Naive thymus-derived CD4-positive, alpha-beta T cell (primary cell): ENCODE measurements at regions of chr20 and their contacts with region 1.

Region 1: DNA sequence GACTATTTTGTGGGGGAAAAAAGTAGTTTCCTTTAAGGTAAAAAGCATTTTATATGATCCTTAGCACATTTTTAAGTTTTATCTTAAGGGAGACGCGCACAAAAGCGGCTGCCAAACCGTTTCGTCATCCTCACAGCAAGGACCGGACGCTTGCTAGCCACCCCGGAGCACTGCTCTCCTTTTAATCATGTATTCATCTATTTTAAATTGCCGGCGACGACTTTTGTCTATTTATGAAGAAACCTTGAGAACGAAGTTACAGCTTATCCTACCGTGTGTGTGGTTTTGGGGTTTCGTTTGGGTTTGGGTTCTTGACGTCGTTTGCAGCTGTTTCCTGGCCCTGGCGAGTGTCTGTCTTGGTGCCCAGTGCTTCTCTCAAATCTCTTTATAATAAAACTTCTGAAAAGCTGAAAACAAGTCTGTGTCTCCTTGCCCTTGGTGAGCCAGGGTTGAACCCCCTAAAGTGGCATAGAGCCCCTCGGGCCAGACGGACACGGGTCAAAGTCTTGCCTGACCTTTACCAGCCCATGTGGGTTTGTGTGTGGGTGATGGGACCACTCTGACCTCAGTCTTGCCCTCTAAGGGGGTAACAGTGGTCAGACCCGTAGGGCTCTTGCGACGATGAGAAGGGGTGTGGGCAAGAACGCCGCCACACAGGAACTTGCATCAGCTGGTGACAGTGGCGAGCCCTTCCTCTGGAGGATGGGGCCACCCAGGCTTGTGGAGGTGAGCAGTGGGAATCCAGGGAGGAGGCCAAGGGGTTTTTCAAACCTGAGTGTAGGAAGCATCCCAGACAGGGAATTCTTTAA is 117.6 kb downstream of the JPH2 start:
- DNase-seq: peak; percentile 47 to 97 (median 90)
- ATAC-seq: peak; percentile 65
- H3K4me3 ChIP-seq: peak overlapping the region; percentile 60
- H3K4me3 Mint-ChIP-seq: peak overlapping the region; percentile 70 to 93 (median 86)
- H3K27ac ChIP-seq: peak overlapping the region; percentile 97
- H3K27ac Mint-ChIP-seq: peak overlapping the region; percentile 94 to 100 (median 99)
- H3K4me1 ChIP-seq: peaks cover 31 to 77% of the 10 kb centered on the region in 2 donors
- H3K4me1 Mint-ChIP-seq: peaks cover 40 to 96% (median 81%) of the 10 kb centered on the region in 7 donors
- H3K27me3 ChIP-seq: no peaks in the 10 kb centered on the region
- H3K27me3 Mint-ChIP-seq: peaks cover 0 to 16% (median 0%) of the 10 kb centered on the region in 5 donors

Region 2: DNA sequence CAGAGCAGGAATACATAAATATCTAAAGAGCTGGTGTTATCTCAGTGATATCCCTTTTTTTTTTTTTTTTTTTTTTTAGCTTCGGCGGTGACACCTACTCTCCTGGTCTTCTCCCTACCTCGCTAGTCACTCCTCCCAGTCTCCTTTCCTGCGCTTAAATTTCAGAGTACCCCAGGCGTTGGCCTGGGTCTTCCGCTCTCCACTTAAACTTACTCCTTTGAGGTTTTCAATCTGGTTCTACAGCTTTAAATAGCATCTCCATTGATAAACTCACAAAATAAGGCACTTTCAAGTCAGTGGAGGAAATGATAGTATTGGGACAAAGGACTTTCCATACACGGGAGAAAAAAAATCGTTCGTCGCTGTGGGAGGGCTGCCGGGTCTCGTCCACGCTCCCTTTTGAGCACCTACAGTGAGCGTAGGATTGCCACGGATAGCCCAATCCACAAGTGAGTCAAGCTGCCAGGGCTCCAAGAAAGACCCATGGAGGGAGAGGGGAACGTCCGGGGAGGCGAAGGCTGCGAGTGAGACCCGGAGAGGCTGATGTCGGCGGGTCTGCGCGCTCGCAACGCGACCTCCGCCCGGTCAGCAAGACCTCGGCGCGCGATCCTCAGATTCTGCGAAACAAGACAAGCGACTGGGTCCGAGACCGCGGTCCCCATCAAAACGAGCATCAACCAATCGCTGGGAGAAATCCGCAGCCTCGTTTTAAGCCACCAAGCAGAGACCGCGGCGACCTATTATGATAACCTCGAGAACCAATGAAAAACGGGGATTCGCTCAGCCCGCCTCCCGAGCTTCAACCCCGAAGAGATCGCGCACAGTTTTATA is 612.4 kb before region 1 on chr20:
- CTCF ChIA-PET with region 1: no interaction called
- POLR2A ChIA-PET with region 1: no interaction called
- intact Hi-C with region 1: loop called (anchors 2 to 5 kb)
- DNase-seq: peak in 7 of 9 donors; percentile 73 to 92 (median 91)
- ATAC-seq: peak; percentile 82
- H3K4me3 ChIP-seq: peak overlapping the region; percentile 86
- H3K4me3 Mint-ChIP-seq: peak overlapping the region; percentile 79 to 100 (median 94)
- H3K27ac ChIP-seq: peak overlapping the region; percentile 100
- H3K27ac Mint-ChIP-seq: peak overlapping the region; percentile 96 to 100 (median 99)
- H3K4me1 ChIP-seq: peaks cover 10 to 29% of the 10 kb centered on the region in 2 donors
- H3K4me1 Mint-ChIP-seq: peaks cover 24 to 42% (median 35%) of the 10 kb centered on the region in 7 donors
- H3K27me3 ChIP-seq: no peaks in the 10 kb centered on the region
- H3K27me3 Mint-ChIP-seq: peaks cover 0 to 14% (median 4%) of the 10 kb centered on the region in 5 donors

Region 3: GRCh38 chr20:43840382-43841070 is 228.9 kb before region 1 on chr20:
- CTCF ChIA-PET with region 1: no interaction called
- POLR2A ChIA-PET with region 1: no interaction called
- intact Hi-C with region 1: loop called in 1 of 2 experiments (anchors 5 kb)
- DNase-seq: peak in 6 of 9 donors; percentile 17 to 38 (median 23)
- ATAC-seq: peak; percentile 56
- H3K4me3 ChIP-seq: no peak overlapping the region
- H3K4me3 Mint-ChIP-seq: no peak overlapping the region
- H3K27ac ChIP-seq: no peak overlapping the region
- H3K27ac Mint-ChIP-seq: peak overlapping the region in 2 of 9 donors; percentile 67 to 74
- H3K4me1 ChIP-seq: peaks cover 0 to 11% of the 10 kb centered on the region in 2 donors
- H3K4me1 Mint-ChIP-seq: peaks cover 10 to 55% (median 18%) of the 10 kb centered on the region in 7 donors
- H3K27me3 ChIP-seq: no peaks in the 10 kb centered on the region
- H3K27me3 Mint-ChIP-seq: peaks cover 0 to 13% (median 0%) of the 10 kb centered on the region in 5 donors

Region 4: GRCh38 chr20:43949741-43950618 is 119.4 kb before region 1 on chr20:
- CTCF ChIA-PET with region 1: no interaction called
- POLR2A ChIA-PET with region 1: interaction called, 3 read pairs
- intact Hi-C with region 1: loop called (anchors 1 to 2 kb)
- DNase-seq: peak; percentile 46 to 74 (median 68)
- ATAC-seq: peak; percentile 96
- H3K4me3 ChIP-seq: peak overlapping the region; percentile 28
- H3K4me3 Mint-ChIP-seq: peak overlapping the region; percentile 42 to 83 (median 76)
- H3K27ac ChIP-seq: no peak overlapping the region
- H3K27ac Mint-ChIP-seq: peak overlapping the region; percentile 5 to 84 (median 61)
- H3K4me1 ChIP-seq: peaks cover 63 to 65% of the 10 kb centered on the region in 2 donors
- H3K4me1 Mint-ChIP-seq: peaks cover 71 to 95% (median 84%) of the 10 kb centered on the region in 7 donors
- H3K27me3 ChIP-seq: peaks cover 0 to 5% of the 10 kb centered on the region in 2 donors
- H3K27me3 Mint-ChIP-seq: peaks cover 0 to 55% (median 4%) of the 10 kb centered on the region in 5 donors

Region 5: DNA sequence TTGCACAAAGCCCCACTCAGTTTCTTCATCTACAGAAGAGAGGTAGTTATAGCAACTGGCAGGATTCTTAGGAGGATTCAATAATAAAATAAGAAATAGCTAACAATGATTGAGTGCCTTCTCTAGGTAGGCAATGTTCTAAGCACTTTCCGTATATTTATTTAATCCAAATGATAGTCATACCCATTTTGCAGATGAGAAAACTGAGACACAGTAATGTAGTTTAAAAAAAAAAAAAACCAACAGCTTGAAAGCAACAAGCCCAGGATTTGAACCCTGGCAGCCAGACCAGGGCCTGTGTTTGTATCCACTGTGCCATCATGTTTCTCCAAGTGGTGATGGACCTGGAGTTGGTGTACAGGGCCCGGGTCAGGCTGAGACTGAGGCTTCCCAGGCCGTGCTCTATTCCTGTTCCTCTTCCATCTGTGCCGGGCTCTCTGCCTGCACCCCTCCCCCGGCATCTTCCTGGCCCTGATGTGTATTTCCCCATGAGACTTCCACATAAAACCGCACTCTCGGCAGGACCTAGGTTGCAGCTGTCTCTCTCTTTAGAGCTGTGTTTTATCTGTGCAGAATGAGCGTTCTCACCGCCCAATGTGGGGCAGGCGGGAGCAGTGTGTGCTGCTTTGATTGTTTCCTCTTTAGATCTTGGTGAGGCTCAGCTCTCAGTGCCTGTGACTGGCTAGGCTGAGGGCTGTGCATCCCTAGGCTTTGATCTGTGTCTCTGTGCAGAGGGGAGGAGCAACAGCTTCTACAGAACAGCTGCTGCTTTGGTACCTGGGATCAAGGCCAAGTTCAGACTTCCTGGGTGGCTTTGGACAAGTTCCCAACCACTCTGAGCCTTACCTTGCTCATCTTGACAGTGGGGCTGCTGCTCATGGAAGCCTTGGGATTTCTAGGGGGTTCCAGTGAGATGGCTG is 105.3 kb before region 1 on chr20:
- CTCF ChIA-PET with region 1: no interaction called
- POLR2A ChIA-PET with region 1: interaction called, 6 read pairs
- intact Hi-C with region 1: loop called in 1 of 2 experiments (anchors 1 kb)
- DNase-seq: peak in 7 of 9 donors; percentile 71 to 86 (median 83)
- ATAC-seq: peak; percentile 94
- H3K4me3 ChIP-seq: no peak overlapping the region
- H3K4me3 Mint-ChIP-seq: peak overlapping the region; percentile 47 to 80 (median 72)
- H3K27ac ChIP-seq: peak overlapping the region; percentile 18
- H3K27ac Mint-ChIP-seq: peak overlapping the region in 4 of 9 donors; percentile 16 to 90 (median 59)
- H3K4me1 ChIP-seq: peaks cover 43 to 65% of the 10 kb centered on the region in 2 donors
- H3K4me1 Mint-ChIP-seq: peaks cover 25 to 52% (median 43%) of the 10 kb centered on the region in 7 donors
- H3K27me3 ChIP-seq: no peaks in the 10 kb centered on the region
- H3K27me3 Mint-ChIP-seq: peaks cover 0 to 18% (median 0%) of the 10 kb centered on the region in 5 donors

Region 6: DNA sequence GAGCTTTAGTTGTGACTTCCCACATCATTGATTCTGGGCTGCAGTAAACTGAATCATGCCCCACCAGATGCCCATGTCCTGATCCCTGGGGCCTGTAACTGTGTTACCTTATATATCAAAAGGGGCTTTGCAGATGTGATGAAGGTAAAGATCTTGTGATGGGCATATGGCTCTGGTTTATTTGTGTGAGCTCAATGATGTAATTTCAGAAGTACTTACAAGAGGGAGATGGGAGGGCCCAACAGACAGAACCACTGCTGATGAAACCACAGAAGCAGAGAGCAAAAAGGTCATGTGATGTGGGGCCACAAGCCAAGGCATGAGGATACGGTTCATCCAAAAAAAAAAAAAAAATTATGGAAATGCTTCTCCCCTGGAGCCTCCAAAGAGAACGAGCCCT is 36.1 kb before region 1 on chr20:
- CTCF ChIA-PET with region 1: no interaction called
- POLR2A ChIA-PET with region 1: no interaction called
- intact Hi-C with region 1: loop called in 1 of 2 experiments (anchors 5 kb)
- DNase-seq: no peak
- ATAC-seq: no peak
- H3K4me3 ChIP-seq: no peak overlapping the region
- H3K4me3 Mint-ChIP-seq: no peak overlapping the region
- H3K27ac ChIP-seq: no peak overlapping the region
- H3K27ac Mint-ChIP-seq: peak overlapping the region in 2 of 9 donors; percentile 2 to 32
- H3K4me1 ChIP-seq: peaks cover 11 to 13% of the 10 kb centered on the region in 2 donors
- H3K4me1 Mint-ChIP-seq: peaks cover 25 to 60% (median 45%) of the 10 kb centered on the region in 7 donors
- H3K27me3 ChIP-seq: no peaks in the 10 kb centered on the region
- H3K27me3 Mint-ChIP-seq: peaks cover 0 to 55% (median 13%) of the 10 kb centered on the region in 5 donors

Region 7: GRCh38 chr20:44080646-44081267 is 11.3 kb after region 1 on chr20:
- CTCF ChIA-PET with region 1: interaction called, 31 read pairs
- POLR2A ChIA-PET with region 1: interaction called, 46 read pairs
- intact Hi-C with region 1: loop called (anchors 1 kb)
- DNase-seq: peak; percentile 55 to 85 (median 79)
- ATAC-seq: peak; percentile 100
- H3K4me3 ChIP-seq: no peak overlapping the region
- H3K4me3 Mint-ChIP-seq: peak overlapping the region in 8 of 10 donors; percentile 0 to 48 (median 29)
- H3K27ac ChIP-seq: no peak overlapping the region
- H3K27ac Mint-ChIP-seq: peak overlapping the region in 8 of 9 donors; percentile 66 to 96 (median 86)
- H3K4me1 ChIP-seq: peaks cover 0 to 18% of the 10 kb centered on the region in 2 donors
- H3K4me1 Mint-ChIP-seq: peaks cover 13 to 38% (median 25%) of the 10 kb centered on the region in 7 donors
- H3K27me3 ChIP-seq: no peaks in the 10 kb centered on the region
- H3K27me3 Mint-ChIP-seq: peaks cover 0 to 4% (median 0%) of the 10 kb centered on the region in 5 donors

Region 8: DNA sequence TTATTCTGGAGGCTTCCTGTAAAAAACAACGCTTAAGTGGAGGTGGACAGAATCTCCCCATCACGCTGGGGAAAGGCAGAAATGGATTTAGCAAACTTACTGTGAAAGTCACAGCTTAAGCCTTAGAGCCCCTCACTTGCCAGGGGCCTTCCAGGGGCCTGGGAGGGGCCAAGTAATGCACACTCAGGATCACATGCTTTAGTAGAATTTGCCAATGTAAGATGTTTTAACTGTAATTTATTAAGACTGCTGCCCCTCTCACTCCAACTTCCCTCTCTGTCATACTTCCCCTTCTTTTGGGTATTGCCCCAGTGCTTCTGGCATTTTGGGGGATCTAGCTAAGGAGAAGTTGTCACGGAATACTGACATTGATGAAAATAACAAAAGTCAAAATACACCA is 594.7 kb after region 1 on chr20:
- CTCF ChIA-PET with region 1: no interaction called
- POLR2A ChIA-PET with region 1: no interaction called
- intact Hi-C with region 1: no loop called
- DNase-seq: no peak
- ATAC-seq: peak; percentile 71
- H3K4me3 ChIP-seq: no peak overlapping the region
- H3K4me3 Mint-ChIP-seq: no peak overlapping the region
- H3K27ac ChIP-seq: no peak overlapping the region
- H3K27ac Mint-ChIP-seq: no peak overlapping the region
- H3K4me1 ChIP-seq: no peaks in the 10 kb centered on the region
- H3K4me1 Mint-ChIP-seq: peaks cover 4 to 24% (median 19%) of the 10 kb centered on the region in 7 donors
- H3K27me3 ChIP-seq: no peaks in the 10 kb centered on the region
- H3K27me3 Mint-ChIP-seq: no peaks in the 10 kb centered on the region